CD4-positive, alpha-beta T cell (primary cell): ENCODE measurements at regions of chr9 and their contacts with region 1.

Region 1: DNA sequence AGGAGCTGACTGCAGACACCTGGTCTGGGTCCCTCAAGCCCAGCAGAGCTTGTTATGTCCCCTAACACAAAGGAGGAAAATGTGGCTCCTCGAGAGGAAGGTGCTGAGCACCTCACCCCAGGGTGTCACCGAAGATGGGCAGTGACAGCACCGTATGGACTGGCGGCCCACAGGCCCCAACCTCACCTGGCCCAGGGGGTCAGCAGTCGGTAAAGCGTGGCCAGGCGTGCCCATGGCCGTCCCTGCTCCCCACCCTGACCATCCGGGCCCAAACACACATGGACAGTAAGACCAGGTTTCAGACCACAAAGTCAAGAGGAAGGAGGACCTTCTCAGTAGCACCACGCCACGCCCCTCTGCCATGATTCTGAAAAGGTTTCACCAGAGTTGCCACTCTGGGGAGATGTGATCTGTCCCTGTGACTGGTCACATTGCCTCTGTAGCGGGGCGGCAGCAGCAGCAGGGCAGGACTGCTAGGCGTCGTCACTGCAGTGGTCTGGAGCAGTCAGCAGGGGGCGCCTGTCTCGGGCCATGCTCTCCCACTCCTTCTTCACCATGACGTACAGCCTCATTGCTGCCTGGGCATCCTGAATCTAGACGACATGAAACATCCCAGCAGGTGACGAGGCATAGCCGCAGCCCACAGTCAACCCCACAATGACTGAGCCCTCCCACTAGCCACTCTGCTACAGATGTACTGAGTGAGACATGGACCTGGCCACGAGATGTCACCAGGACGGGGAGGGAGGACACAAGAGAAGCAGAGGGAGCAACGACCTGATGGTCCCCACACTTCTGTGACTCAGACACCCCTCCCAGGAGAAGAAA is 11.1 kb downstream of the REXO4 start:
- DNase-seq: peak; percentile 68 to 89 (median 74)
- ATAC-seq: peak; percentile 93
- H3K4me3 ChIP-seq: no peak overlapping the region
- H3K4me3 Mint-ChIP-seq: no peak overlapping the region
- H3K27ac ChIP-seq: no peak overlapping the region
- H3K27ac Mint-ChIP-seq: peak overlapping the region; percentile 73
- H3K4me1 ChIP-seq: peaks cover 9% of the 10 kb centered on the region
- H3K4me1 Mint-ChIP-seq: peaks cover 6% of the 10 kb centered on the region
- H3K27me3 ChIP-seq: no peaks in the 10 kb centered on the region
- H3K27me3 Mint-ChIP-seq: no peaks in the 10 kb centered on the region
- CTCF ChIP-seq: peak; percentile 91

Region 2: GRCh38 chr9:133238851-133239532 is 167.7 kb before region 1 on chr9:
- CTCF ChIA-PET with region 1: no interaction called
- POLR2A ChIA-PET with region 1: no interaction called
- intact Hi-C with region 1: loop called (anchors 1 to 2 kb)
- DNase-seq: peak; percentile 32 to 80 (median 61)
- ATAC-seq: peak; percentile 91
- H3K4me3 ChIP-seq: peak overlapping the region; percentile 30
- H3K4me3 Mint-ChIP-seq: peak overlapping the region; percentile 56
- H3K27ac ChIP-seq: no peak overlapping the region
- H3K27ac Mint-ChIP-seq: no peak overlapping the region
- H3K4me1 ChIP-seq: peaks cover 13% of the 10 kb centered on the region
- H3K4me1 Mint-ChIP-seq: peaks cover 10% of the 10 kb centered on the region
- H3K27me3 ChIP-seq: peaks cover 4 to 15% of the 10 kb centered on the region in 2 experiments
- H3K27me3 Mint-ChIP-seq: peaks cover 31% of the 10 kb centered on the region
- CTCF ChIP-seq: peak; percentile 62